HepG2 (cell line): ENCODE measurements at regions of chr12 and their contacts with region 1.

Region 1: DNA sequence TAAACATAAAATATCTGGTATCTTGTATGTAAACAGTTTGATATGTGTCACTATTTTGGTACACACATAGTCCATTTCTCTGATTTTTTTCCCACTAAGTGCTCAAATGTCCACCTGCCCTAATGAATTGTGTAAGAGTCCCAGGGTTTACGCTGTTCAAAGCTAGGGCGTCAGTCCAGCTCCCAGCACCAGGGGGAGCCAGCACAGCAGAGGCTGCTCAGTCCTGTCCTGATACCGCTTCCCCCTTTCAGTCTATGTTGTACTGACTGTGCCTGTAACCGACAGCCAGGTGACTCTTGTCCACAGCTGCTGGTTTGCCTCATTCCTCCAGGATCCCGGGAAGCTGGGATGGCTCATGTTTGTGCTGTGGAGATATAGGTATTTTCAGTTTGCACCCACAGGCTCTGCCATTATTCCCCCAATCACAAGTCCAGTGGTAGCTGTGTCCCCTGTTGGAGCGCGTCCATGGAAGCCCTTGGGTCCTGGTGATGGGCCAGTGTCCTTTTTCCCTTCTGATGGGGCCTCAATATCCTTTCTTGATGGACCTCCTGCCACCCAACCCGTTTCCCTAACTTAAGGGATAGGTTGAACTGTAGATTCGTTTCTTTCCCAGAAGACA is 242.0 kb downstream of the NEDD1 start:
- DNase-seq: peak; percentile 56
- ATAC-seq: peak; percentile 100
- H3K4me3 ChIP-seq: no peak overlapping the region
- H3K27ac ChIP-seq: no peak overlapping the region
- H3K4me1 ChIP-seq: no peaks in the 10 kb centered on the region
- H3K27me3 ChIP-seq: no peaks in the 10 kb centered on the region
- CTCF ChIP-seq: peak; percentile 94
- EP300 ChIP-seq: no peak
- POLR2A ChIP-seq: no peak
- RAD21 ChIP-seq: peak; percentile 85

Region 2: GRCh38 chr12:97308576-97309198 is 159.6 kb after region 1 on chr12:
- CTCF ChIA-PET with region 1: interaction called, 20 read pairs
- POLR2A ChIA-PET with region 1: no interaction called
- in situ Hi-C with region 1: no loop called
- intact Hi-C with region 1: loop called (anchors 1 kb)
- DNase-seq: peak; percentile 39
- ATAC-seq: no peak
- H3K4me3 ChIP-seq: no peak overlapping the region
- H3K27ac ChIP-seq: no peak overlapping the region
- H3K4me1 ChIP-seq: no peaks in the 10 kb centered on the region
- H3K27me3 ChIP-seq: no peaks in the 10 kb centered on the region
- CTCF ChIP-seq: peak; percentile 61
- EP300 ChIP-seq: no peak
- POLR2A ChIP-seq: no peak
- RAD21 ChIP-seq: no peak; the same call in 1 of the 2 replicates

Region 3: DNA sequence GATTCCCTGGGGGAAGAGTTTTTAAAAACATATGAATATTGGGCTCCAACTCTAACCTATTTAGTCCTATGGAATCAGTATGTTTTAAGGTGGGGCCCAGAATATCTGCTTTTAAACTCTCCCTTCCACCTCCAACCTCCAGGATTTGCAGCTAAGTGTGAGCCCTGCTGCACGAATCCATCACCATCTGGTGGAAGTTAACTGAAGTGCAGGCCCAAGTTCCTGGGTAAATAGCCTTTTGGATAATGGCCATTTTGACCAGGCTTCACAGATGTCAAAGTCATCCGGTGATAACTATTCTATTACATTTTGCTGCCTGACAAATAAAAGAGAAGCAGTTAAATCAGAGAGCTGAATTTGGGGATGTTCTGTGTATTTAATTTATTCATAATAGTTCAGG is 255.5 kb after region 1 on chr12:
- CTCF ChIA-PET with region 1: interaction called, 13 read pairs
- POLR2A ChIA-PET with region 1: no interaction called
- in situ Hi-C with region 1: no loop called
- intact Hi-C with region 1: loop called (anchors 1 kb)
- DNase-seq: peak; percentile 51
- ATAC-seq: peak; percentile 92
- H3K4me3 ChIP-seq: no peak overlapping the region
- H3K27ac ChIP-seq: no peak overlapping the region
- H3K4me1 ChIP-seq: no peaks in the 10 kb centered on the region
- H3K27me3 ChIP-seq: no peaks in the 10 kb centered on the region; a peak in 2 of 5 replicates
- CTCF ChIP-seq: peak; percentile 81
- EP300 ChIP-seq: no peak
- POLR2A ChIP-seq: no peak
- RAD21 ChIP-seq: peak; percentile 73

Region 4: GRCh38 chr12:98002712-98003493 is 853.9 kb after region 1 on chr12:
- CTCF ChIA-PET with region 1: no interaction called
- POLR2A ChIA-PET with region 1: no interaction called
- in situ Hi-C with region 1: no loop called
- intact Hi-C with region 1: loop called (anchors 2 kb)
- DNase-seq: peak; percentile 36
- ATAC-seq: peak; percentile 64
- H3K4me3 ChIP-seq: no peak overlapping the region
- H3K27ac ChIP-seq: no peak overlapping the region
- H3K4me1 ChIP-seq: no peaks in the 10 kb centered on the region
- H3K27me3 ChIP-seq: no peaks in the 10 kb centered on the region
- CTCF ChIP-seq: peak; percentile 74
- EP300 ChIP-seq: no peak
- POLR2A ChIP-seq: no peak
- RAD21 ChIP-seq: no peak; the same call in 1 of the 2 replicates

Region 5: DNA sequence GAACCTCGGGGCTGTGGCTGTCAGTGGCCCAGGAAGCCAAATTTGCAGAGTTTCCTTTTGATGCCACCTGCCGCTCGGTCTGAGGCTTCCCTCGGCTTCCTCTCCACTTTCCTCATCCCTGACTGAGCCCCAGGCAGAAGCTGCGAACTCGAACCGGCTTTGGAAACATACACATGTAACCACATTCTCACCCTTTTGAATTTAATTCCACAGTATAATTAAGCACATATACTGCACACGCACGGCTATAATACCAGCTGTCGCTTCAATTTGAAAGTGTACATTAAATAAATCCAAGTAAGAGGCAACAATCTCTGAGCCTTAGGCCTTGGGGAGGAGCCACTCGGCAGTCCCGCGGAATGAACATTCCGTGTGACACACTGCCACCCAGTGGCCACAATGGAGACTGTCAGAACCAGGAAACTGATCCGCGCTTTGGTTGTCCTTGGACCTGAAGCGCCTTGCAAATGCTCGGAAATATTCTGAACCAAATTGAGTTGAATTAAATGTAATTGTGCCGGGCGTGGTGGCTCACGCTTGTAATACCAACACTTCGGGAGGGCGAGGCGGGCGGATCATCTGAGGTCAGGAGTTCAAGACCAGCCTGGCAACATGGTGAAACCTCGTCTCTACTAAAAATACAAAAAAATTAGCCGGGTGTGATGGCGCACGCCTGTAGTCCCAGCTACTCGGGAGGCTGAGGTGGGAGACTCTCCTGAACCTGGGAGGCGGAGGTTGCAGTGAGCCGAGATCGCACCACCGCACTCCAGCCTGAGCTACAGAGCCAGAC is 1248.5 kb after region 1 on chr12:
- CTCF ChIA-PET with region 1: no interaction called
- POLR2A ChIA-PET with region 1: no interaction called
- in situ Hi-C with region 1: loop called (anchors 25 kb)
- intact Hi-C with region 1: no loop called
- DNase-seq: peak; percentile 68
- ATAC-seq: peak; percentile 94
- H3K4me3 ChIP-seq: peak overlapping the region; percentile 50 to 60 (median 54)
- H3K27ac ChIP-seq: no peak overlapping the region
- H3K4me1 ChIP-seq: peaks cover 31% of the 10 kb centered on the region
- H3K27me3 ChIP-seq: no peaks in the 10 kb centered on the region
- CTCF ChIP-seq: peak; percentile 93
- EP300 ChIP-seq: no peak
- POLR2A ChIP-seq: no peak
- RAD21 ChIP-seq: peak; percentile 78